Activated CD4-positive, alpha-beta T cell treated with anti-CD3 and anti-CD28 coated beads for 36 hours (primary cell): ENCODE measurements at regions of chr3 and their contacts with region 1.

Region 1: DNA sequence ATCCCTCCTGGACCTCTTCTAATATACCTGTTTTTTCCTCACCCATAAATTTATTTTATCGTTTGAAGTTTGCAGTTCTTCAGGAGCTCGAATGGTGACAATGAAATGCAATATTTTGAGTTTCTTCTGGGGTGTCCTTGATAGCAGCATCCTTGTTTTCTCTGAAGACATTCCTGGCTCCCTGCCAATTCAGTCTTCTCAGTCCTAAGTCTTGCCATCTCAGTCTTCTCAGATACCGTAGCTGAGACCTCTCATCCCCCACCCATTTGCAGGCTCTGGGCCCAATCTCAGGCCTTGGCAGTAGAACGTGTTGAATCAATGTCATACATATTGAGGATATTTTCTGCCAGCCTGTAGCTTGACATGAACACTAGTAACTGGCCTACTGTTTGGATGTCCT is 140.9 kb downstream of the NECTIN3 start:
- DNase-seq: no peak
- ATAC-seq: no peak
- H3K4me3 Mint-ChIP-seq: no peak overlapping the region
- H3K27ac Mint-ChIP-seq: no peak overlapping the region
- H3K4me1 Mint-ChIP-seq: no peaks in the 10 kb centered on the region
- H3K27me3 Mint-ChIP-seq: no peaks in the 10 kb centered on the region

Region 2: GRCh38 chr3:111173328-111173900 is 39.1 kb before region 1 on chr3:
- CTCF ChIA-PET with region 1: no interaction called
- POLR2A ChIA-PET with region 1: no interaction called
- intact Hi-C with region 1: no loop called
- DNase-seq: no peak
- ATAC-seq: no peak
- H3K4me3 Mint-ChIP-seq: no peak overlapping the region
- H3K27ac Mint-ChIP-seq: no peak overlapping the region
- H3K4me1 Mint-ChIP-seq: no peaks in the 10 kb centered on the region
- H3K27me3 Mint-ChIP-seq: no peaks in the 10 kb centered on the region

Region 3: DNA sequence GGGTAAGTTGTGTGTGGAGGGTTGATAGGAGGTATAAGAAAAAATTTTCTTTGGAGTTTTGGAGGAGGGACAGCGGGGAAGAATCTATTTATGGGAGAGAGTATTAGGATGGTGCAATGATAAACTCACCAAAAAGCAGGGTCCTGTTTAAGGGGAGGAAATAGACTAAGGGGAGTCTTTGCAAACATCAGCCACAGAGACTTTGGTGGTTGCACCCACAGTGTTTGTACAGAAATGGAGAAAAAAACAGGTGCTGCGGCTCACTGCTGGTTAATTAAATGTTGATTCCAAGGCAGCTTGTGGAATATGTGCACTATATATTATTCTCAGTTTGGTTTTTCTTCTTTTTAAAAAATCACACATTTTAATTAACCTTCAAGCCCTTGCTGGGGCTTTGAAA is 41.2 kb after region 1 on chr3:
- CTCF ChIA-PET with region 1: no interaction called
- POLR2A ChIA-PET with region 1: no interaction called
- intact Hi-C with region 1: loop called in 1 of 2 experiments (anchors 2 kb)
- DNase-seq: no peak
- ATAC-seq: no peak
- H3K4me3 Mint-ChIP-seq: no peak overlapping the region
- H3K27ac Mint-ChIP-seq: no peak overlapping the region
- H3K4me1 Mint-ChIP-seq: no peaks in the 10 kb centered on the region
- H3K27me3 Mint-ChIP-seq: peaks cover 2% of the 10 kb centered on the region